Breast epithelium (tissue), 4 donors: ENCODE measurements at regions of chr6 and their contacts with region 1.

Region 1: GRCh38 chr6:156731396-156731795 is 45.8 kb upstream of the ARID1B start:
- DNase-seq: no peak
- H3K4me3 ChIP-seq: no peak overlapping the region
- H3K27ac ChIP-seq: no peak overlapping the region
- H3K4me1 ChIP-seq: no peaks in the 10 kb centered on the region
- H3K27me3 ChIP-seq: no peaks in the 10 kb centered on the region
- CTCF ChIP-seq: no peak
- POLR2A ChIP-seq: no peak

Region 2: DNA sequence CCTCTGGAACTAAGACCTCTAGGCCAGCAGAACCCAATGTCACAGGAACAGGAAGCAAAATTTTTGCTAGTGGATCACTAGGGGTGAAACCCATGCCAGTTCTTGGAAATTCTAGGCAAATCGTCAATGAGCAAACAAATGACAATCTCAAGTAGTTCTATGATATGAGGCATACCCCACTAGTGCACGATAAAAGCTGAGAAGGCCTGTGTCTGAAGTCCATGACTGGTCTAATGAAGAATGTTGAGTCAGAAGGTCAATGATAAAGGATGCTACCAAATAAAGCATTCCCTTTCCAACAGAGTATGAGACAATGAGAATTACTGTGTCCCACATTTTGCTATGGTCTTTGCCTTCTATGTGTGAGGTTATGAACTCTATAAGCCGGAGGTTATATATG is 1126.4 kb before region 1 on chr6:
- intact Hi-C with region 1: no loop called
- DNase-seq: no peak
- H3K4me3 ChIP-seq: no peak overlapping the region
- H3K27ac ChIP-seq: no peak overlapping the region
- H3K4me1 ChIP-seq: no peaks in the 10 kb centered on the region
- H3K27me3 ChIP-seq: no peaks in the 10 kb centered on the region
- CTCF ChIP-seq: no peak
- POLR2A ChIP-seq: no peak

Region 3: DNA sequence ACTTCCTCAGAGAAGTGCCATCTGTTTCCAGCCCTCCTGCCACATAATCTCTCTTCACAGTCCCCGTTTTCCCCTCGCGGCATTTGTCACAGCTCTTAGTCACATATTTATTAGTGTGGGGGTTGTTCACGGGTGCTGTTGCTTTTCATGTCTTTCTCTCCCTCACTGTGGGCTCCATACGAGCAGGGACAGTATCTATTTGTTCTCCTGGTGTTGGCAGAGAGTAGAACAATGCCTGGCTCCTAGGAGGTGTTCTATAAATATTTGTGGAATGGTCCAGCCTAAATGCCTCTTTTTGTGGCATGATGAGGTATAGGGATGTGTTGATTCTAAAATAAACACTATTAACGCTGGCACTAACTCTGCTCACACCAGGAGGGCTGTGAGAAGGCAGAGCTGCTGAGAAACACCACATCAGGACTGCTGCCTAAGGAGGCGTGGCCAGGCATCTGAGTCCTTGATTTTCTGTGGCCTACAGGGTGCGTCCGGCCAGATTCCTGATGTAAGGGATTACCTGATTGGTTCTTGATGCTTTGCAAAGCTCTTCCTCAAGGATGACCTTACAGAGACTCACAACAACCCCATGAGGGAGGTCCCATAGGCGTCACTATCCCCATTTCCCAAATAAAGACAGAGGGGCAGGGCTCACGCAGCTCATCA is 174.0 kb before region 1 on chr6:
- intact Hi-C with region 1: no loop called
- DNase-seq: no peak
- H3K4me3 ChIP-seq: no peak overlapping the region
- H3K27ac ChIP-seq: no peak overlapping the region
- H3K4me1 ChIP-seq: no peaks in the 10 kb centered on the region
- H3K27me3 ChIP-seq: no peaks in the 10 kb centered on the region
- CTCF ChIP-seq: no peak
- POLR2A ChIP-seq: no peak

Region 4: GRCh38 chr6:157169656-157170055 is 438.3 kb after region 1 on chr6:
- intact Hi-C with region 1: loop called (anchors 5 kb)
- DNase-seq: no peak
- H3K4me3 ChIP-seq: no peak overlapping the region
- H3K27ac ChIP-seq: no peak overlapping the region
- H3K4me1 ChIP-seq: no peaks in the 10 kb centered on the region
- H3K27me3 ChIP-seq: no peaks in the 10 kb centered on the region
- CTCF ChIP-seq: no peak
- POLR2A ChIP-seq: no peak